ENCODE measurements at regions of chr4 and their contacts with region 1.

Region 1: DNA sequence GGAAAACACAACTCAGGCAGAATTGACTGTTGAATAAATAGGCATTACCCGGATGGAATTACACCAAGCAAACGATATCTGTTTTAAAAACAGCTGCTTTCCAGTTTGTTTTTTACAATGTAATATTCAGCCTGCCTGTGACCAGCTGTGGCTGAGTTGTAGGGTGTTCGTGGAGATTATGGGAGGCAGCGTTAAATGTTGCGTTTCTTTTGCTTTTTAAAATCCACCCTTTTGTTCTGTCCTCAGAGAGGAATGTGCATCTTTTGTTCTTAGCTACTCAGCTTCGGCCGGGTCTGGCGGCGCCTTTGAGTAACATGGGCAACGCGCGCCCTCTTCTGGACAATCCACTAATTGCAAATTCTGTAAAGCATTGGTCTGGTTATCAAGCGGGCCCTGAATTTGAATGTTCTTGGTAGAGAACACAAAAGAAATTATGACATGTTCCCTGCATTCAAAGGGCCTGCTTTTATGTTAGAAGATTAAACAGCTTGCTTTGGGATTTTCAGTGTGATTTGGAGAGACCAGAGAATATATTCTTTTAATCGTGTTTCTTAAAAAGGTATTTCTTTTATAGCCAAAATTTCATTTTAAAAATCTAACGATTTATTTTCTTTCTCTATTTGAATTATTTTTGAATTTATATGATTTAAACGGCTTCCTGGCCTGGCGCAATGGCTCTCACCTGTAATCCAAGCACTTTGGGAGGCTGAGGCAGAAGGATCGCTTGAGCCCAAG is 76.3 kb upstream of the TRIM2 start:
- DNase-seq: peak; percentile 80
- H3K4me3 ChIP-seq: peak overlapping the region in 1 of 2 experiments; percentile 16; a peak in 1 of 4 replicates
- H3K27ac ChIP-seq: peak overlapping the region in 1 of 2 experiments; percentile 39; a peak in 1 of 4 replicates
- H3K4me1 ChIP-seq: no peaks in the 10 kb centered on the region; a peak in 1 of 4 replicates
- H3K27me3 ChIP-seq: no peaks in the 10 kb centered on the region
- CTCF ChIP-seq: peak; percentile 90
- EP300 ChIP-seq: no peak
- RAD21 ChIP-seq: peak; percentile 92

Region 2: GRCh38 chr4:152843481-152844090 is 284.3 kb before region 1 on chr4:
- CTCF ChIA-PET with region 1: interaction called, 45 read pairs
- POLR2A ChIA-PET with region 1: no interaction called
- DNase-seq: no peak
- H3K4me3 ChIP-seq: no peak overlapping the region
- H3K27ac ChIP-seq: no peak overlapping the region
- H3K4me1 ChIP-seq: no peaks in the 10 kb centered on the region; a peak in 1 of 4 replicates
- H3K27me3 ChIP-seq: no peaks in the 10 kb centered on the region
- CTCF ChIP-seq: no peak
- EP300 ChIP-seq: no peak
- RAD21 ChIP-seq: no peak

Region 3: DNA sequence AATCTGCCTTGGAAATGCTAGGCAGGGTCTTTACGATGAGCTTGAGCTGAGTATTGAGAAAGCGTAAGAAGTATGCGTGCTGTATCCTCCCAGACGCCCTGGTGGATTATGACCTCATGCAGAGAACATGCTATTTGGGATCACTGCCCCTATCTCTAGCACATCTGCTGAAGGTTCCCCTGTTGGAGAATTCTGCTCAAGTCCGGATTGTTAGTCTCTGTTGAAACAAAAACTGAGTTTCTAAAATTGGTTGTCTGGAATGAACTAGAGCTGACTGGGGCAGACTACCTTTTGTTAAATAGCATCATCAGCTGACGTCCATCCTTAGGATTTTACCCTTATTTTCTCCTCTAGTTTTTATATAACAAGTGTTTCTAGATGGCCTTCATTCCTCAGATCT is 184.3 kb before region 1 on chr4:
- CTCF ChIA-PET with region 1: interaction called, 10 read pairs
- POLR2A ChIA-PET with region 1: no interaction called
- DNase-seq: no peak
- H3K4me3 ChIP-seq: no peak overlapping the region
- H3K27ac ChIP-seq: no peak overlapping the region; a peak in 1 of 4 replicates
- H3K4me1 ChIP-seq: no peaks in the 10 kb centered on the region; a peak in 2 of 4 replicates
- H3K27me3 ChIP-seq: peaks cover 11% of the 10 kb centered on the region
- CTCF ChIP-seq: no peak
- EP300 ChIP-seq: no peak
- RAD21 ChIP-seq: no peak

Region 4: GRCh38 chr4:153083447-153083947 is 44.4 kb before region 1 on chr4:
- CTCF ChIA-PET with region 1: interaction called, 151 read pairs
- POLR2A ChIA-PET with region 1: no interaction called
- DNase-seq: peak; percentile 72
- H3K4me3 ChIP-seq: no peak overlapping the region; a peak in 1 of 4 replicates
- H3K27ac ChIP-seq: no peak overlapping the region
- H3K4me1 ChIP-seq: peaks cover 4 to 11% of the 10 kb centered on the region in 2 experiments; a peak in 2 of 4 replicates
- H3K27me3 ChIP-seq: no peaks in the 10 kb centered on the region
- CTCF ChIP-seq: peak; percentile 70
- EP300 ChIP-seq: no peak
- RAD21 ChIP-seq: peak; percentile 84

Region 5: GRCh38 chr4:153095448-153096204 is 32.3 kb before region 1 on chr4:
- CTCF ChIA-PET with region 1: interaction called, 29 read pairs
- POLR2A ChIA-PET with region 1: no interaction called
- DNase-seq: no peak
- H3K4me3 ChIP-seq: no peak overlapping the region
- H3K27ac ChIP-seq: no peak overlapping the region
- H3K4me1 ChIP-seq: no peaks in the 10 kb centered on the region
- H3K27me3 ChIP-seq: no peaks in the 10 kb centered on the region
- CTCF ChIP-seq: no peak
- EP300 ChIP-seq: no peak
- RAD21 ChIP-seq: no peak

Region 6: DNA sequence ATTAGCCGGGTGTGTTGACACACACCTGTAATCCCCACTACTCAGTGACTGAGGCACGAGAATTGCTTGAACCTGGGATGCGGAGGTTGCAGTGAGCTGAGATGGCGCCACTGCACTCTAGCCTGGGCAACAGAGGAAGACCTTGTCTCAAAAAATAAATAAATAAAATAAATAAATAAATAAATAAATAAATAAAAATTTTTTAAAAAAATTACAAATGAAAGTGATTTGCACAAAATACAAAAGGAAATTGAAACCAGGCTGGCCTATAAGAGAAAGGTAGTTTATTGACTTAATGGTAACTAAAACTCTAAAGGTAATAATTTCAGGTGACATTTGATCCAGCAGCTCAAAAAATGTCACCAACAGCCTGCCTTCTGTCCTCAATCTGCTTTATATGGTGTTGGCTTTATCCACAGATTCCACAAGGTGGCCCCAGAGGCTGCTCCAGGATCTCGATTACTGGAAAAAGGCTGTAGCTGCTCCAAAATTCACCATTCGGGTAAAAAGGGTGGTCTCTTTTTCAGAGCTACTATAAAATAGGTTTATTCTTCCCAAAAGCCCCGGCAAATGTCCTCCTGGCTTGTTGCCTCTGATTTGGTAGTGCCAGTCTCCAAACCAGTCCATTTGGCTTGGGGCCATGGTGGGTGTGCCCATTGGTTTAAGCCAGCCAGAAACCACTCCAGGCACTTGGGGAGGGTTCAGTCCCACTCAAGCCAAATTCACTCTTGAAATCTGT is 14.9 kb after region 1 on chr4:
- CTCF ChIA-PET with region 1: interaction called, 36 read pairs
- POLR2A ChIA-PET with region 1: no interaction called
- DNase-seq: peak; percentile 72
- H3K4me3 ChIP-seq: peak overlapping the region; percentile 21 to 55; a peak in 3 of 4 replicates
- H3K27ac ChIP-seq: peak overlapping the region; percentile 66 to 98
- H3K4me1 ChIP-seq: peaks cover 20 to 36% of the 10 kb centered on the region in 2 experiments; a peak in 3 of 4 replicates
- H3K27me3 ChIP-seq: no peaks in the 10 kb centered on the region
- CTCF ChIP-seq: peak; percentile 98
- EP300 ChIP-seq: no peak
- RAD21 ChIP-seq: peak; percentile 97

Measured in SK-N-SH (cell line).